Activated naive CD4-positive, alpha-beta T cell treated with anti-CD3 and anti-CD28 coated beads, Interleukin-2, amount 10 ng/mL, durations not matched to agents 7 days and 5 days (primary cell): ENCODE measurements at regions of chr1 and their contacts with region 1.

Region 1: DNA sequence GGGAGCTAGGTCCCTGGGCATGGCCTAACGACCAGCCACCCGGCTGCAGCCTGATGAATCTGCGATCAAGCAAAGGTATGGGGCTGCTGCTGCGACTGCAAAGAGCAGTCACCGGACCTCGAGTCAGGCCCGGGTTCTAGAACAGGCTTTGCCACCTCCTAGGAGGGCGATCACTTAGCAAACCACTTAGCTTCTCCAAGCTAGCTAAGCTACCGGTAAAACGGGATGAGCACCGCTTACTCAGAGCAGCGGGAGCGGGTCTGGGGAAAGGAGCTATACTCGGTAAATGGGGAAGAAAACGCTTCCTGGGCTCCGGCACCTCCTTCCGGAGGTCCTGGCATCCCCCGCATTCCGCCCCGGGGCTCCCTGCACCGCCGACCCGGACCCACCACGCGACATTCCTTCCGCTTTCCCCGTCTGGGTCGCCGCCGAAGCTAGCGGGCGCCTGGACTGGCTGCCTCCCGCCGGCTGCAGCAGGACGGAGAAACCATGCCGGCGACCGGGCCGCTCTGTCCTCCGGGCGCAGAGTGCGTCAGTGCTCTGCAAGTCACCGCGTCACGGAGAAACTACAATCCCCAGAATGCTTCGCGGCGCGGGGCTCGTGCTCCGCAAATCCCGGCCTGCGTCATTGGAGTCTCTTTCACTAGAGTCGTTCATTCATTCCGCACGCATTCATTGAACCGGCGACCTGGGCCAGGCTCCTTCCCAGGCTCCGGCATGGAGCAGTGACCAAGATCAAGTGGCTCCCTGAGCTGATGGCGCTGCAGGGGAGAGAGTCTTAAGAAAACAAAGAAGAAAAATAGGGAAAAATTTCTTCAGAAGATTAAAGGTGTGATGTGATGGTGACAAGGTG is at the start of gene LSM10:
- DNase-seq: peak; percentile 95
- H3K4me3 Mint-ChIP-seq: peak within 1 kb of the TSS; percentile 96
- H3K27ac Mint-ChIP-seq: peak within 1 kb of the TSS; percentile 95
- H3K4me1 Mint-ChIP-seq: peaks cover 36% of the 10 kb centered on the region
- H3K27me3 Mint-ChIP-seq: no peaks in the 10 kb centered on the region

Region 2: GRCh38 chr1:36217670-36218069 is 179.9 kb before region 1 on chr1:
- CTCF ChIA-PET with region 1: no interaction called
- DNase-seq: no peak
- H3K4me3 Mint-ChIP-seq: no peak overlapping the region
- H3K27ac Mint-ChIP-seq: no peak overlapping the region
- H3K4me1 Mint-ChIP-seq: peaks cover 5% of the 10 kb centered on the region
- H3K27me3 Mint-ChIP-seq: peaks cover 10% of the 10 kb centered on the region

Region 3: GRCh38 chr1:36385410-36386257 is 12.0 kb before region 1 on chr1 and contains the start of gene STK40:
- CTCF ChIA-PET with region 1: interaction called, 16 read pairs
- DNase-seq: peak; percentile 98
- H3K4me3 Mint-ChIP-seq: peak within 1 kb of the TSS; percentile 75
- H3K27ac Mint-ChIP-seq: peak within 1 kb of the TSS; percentile 100
- H3K4me1 Mint-ChIP-seq: peaks cover 59% of the 10 kb centered on the region
- H3K27me3 Mint-ChIP-seq: no peaks in the 10 kb centered on the region

Region 4: GRCh38 chr1:36411674-36412520 is 14.3 kb after region 1 on chr1:
- CTCF ChIA-PET with region 1: interaction called, 12 read pairs
- DNase-seq: peak; percentile 70
- H3K4me3 Mint-ChIP-seq: no peak overlapping the region
- H3K27ac Mint-ChIP-seq: peak overlapping the region; percentile 88
- H3K4me1 Mint-ChIP-seq: peaks cover 25% of the 10 kb centered on the region
- H3K27me3 Mint-ChIP-seq: peaks cover 4% of the 10 kb centered on the region

Region 5: DNA sequence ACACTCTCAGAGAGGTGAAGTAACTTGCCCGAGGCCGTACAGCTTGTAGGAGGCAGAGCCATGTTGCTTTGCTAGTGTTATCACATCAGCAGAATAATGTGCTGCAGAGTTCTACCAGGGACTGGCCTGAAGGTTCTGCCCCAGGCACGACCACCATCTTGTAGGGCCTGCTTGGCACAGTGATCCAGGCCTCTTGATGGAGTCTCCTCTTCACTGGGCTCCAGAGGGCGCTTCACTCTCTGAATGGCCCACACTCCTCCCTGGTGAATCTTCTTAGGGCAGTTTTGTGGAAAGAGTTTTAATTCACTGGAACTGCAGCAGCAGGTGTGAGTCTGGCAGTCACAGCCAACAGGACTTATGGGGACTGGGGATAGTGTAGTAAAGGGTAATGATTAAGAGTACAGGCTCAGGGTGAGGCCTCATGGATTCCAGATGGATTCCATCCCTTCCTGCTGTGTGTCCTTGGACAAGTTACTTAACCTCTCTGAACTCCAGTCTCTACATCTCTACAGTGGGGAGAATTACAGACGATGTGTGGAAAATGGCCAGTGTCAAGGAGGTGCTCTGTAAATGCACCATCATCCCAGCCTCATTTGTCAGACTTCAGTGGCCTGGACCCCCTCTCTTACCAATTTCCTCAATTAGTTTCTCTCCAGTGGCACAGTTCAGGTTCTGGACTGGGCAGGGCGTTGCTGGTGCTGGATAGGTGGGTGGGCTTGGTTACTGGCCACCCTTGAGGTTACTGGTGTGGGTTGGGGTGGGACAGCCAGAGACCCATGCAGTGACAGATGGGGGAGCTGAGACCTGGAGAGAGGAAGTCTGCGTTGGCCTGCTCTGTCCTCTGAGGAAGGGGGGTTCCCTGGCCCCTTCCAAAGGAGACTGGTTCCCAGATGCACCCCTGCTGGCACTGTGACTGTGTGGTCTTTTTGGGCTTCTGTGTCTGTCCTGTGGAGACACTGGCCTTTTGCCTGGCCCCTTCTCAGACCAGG is 131.1 kb after region 1 on chr1:
- CTCF ChIA-PET with region 1: no interaction called
- DNase-seq: no peak
- H3K4me3 Mint-ChIP-seq: no peak overlapping the region
- H3K27ac Mint-ChIP-seq: no peak overlapping the region
- H3K4me1 Mint-ChIP-seq: peaks cover 2% of the 10 kb centered on the region
- H3K27me3 Mint-ChIP-seq: peaks cover 21% of the 10 kb centered on the region